ENCODE measurements at regions of chr12 and their contacts with region 1.

Region 1: DNA sequence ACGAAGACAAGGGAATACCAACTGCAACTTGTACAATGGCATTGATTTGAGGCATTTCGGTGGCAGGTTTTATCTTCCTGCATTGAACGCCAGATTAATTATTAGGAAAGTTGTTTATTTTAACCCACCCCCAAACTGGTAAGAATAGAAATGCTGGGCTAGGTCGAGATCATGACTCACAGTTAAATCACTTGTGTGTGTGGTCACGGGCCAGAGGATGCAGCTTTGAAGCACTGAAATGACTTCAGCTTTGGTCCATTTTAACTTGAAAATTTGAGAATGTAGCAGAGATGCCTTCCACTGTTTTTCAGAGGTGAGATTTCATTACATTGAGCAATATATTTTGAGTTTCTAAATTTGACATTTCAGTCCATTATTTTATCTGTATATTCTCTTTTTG is 23.6 kb upstream of the KCNH3 start:
- DNase-seq: no peak
- H3K4me3 ChIP-seq: no peak overlapping the region
- H3K27ac ChIP-seq: no peak overlapping the region
- H3K4me1 ChIP-seq: peaks cover 13% of the 10 kb centered on the region
- H3K27me3 ChIP-seq: no peaks in the 10 kb centered on the region
- CTCF ChIP-seq: no peak

Region 2: DNA sequence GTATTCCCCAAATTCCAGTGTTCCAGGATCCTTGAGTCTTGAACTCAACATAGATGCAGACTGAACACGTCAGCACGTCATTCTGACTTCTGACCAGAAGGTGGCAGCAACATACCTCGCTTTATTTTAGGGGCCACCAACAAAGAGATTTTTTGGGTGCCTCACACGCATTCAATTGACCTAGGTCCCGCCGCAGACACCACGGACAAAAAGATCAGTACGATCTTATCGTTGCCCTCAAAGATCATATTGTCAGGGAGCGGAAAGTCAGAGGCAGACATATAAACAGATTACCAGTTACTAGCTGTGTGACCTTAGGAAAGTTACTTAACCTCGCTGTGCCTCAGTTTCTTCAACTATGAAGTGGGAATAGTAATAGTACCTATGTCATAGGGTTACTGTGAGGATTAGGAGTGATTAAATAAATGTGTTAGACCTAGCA is 226.8 kb before region 1 on chr12:
- CTCF ChIA-PET with region 1: interaction called, 5 read pairs
- POLR2A ChIA-PET with region 1: no interaction called
- intact Hi-C with region 1: loop called (anchors 1 kb)
- DNase-seq: peak; percentile 68
- H3K4me3 ChIP-seq: no peak overlapping the region
- H3K27ac ChIP-seq: no peak overlapping the region
- H3K4me1 ChIP-seq: peaks cover 7% of the 10 kb centered on the region
- H3K27me3 ChIP-seq: no peaks in the 10 kb centered on the region
- CTCF ChIP-seq: peak; percentile 93

Region 3: DNA sequence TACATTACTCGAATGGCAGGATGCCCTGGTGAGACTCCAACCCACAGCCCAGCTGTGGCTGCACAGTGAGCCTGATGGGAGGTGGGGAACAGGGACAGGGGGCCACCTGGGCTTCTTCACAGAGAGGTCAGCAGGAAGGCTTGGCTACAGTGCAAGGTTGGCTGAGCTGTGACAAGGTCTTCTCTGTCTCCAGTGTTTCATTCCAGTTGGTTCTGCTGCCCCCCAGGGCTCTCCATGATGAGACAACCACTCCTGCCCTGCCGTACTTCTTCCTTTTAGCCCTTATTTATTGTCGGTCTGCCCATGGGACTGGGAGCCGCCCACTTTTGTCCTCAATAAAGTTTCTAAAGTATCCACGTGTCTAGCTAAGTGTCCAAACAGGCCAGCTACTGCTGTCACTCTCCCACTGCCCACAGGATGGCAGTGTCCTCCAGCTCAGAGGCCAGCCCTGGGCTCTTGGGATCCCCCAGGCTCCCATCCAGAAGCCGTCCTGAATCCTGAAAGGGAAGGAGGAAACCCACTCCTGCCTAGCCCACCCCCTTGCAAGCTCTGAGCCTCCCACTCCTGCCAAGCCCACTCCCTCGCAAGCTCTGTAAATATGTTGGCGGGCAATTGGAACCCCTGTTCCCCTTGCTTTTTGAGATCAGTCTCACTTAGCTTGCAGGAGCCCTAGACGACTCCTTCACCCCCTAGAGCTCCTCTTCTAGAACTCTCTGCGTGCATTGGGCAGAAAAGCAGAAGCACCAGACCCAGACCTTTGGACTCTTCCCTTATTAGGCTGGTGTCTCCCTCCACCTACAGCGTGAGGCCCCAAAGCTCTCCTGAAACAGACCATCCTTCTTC is 183.7 kb before region 1 on chr12:
- CTCF ChIA-PET with region 1: interaction called, 11 read pairs
- POLR2A ChIA-PET with region 1: no interaction called
- intact Hi-C with region 1: no loop called
- DNase-seq: peak; percentile 78
- H3K4me3 ChIP-seq: no peak overlapping the region
- H3K27ac ChIP-seq: no peak overlapping the region
- H3K4me1 ChIP-seq: no peaks in the 10 kb centered on the region
- H3K27me3 ChIP-seq: no peaks in the 10 kb centered on the region
- CTCF ChIP-seq: peak; percentile 74

Region 4: DNA sequence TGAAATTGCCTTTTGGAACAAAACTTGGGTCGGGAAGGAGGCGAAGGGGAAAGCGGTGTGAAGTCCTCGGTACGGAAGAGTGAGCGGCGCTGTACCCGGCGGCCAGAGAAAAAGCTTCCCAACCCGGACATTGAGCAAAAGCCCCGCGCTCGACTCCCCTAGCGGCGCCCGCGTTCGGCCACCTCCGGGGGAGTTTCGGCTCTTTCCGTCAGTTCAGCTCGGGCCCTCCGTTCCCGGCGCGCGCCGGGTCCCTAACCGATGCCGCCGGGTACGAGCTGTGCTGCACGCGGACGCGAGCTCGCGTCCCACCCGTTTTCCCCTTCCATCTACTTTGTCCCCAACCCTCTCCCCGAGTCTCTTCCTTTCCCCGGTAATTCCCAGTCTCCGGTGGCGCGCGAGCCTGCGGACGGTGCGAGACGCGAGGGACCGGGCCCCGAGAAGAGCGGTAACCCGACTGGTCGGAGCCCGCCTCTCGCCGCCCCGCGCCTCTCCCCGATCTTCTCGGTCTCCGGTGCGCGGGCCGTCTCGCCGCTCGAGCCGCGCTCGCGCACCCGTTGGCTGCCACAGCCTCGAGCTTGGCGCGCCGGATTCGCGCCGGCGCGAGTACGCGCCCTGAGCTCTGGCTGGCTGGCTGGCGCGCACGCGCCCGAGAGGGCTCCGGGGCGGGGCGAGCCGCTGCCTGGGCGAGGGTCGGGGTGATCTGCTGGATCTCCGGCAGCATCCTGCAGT is 148.4 kb before region 1 on chr12:
- CTCF ChIA-PET with region 1: interaction called, 13 read pairs
- POLR2A ChIA-PET with region 1: interaction called, 10 read pairs
- intact Hi-C with region 1: no loop called
- DNase-seq: peak; percentile 97
- H3K4me3 ChIP-seq: peak overlapping the region; percentile 75
- H3K27ac ChIP-seq: peak overlapping the region; percentile 97
- H3K4me1 ChIP-seq: peaks cover 20% of the 10 kb centered on the region
- H3K27me3 ChIP-seq: no peaks in the 10 kb centered on the region
- CTCF ChIP-seq: peak; percentile 36; the same call in 1 of the 2 replicates

Region 5: GRCh38 chr12:50110762-50111351 is 595.6 kb after region 1 on chr12:
- CTCF ChIA-PET with region 1: no interaction called
- POLR2A ChIA-PET with region 1: no interaction called
- intact Hi-C with region 1: no loop called
- DNase-seq: peak; percentile 33
- H3K4me3 ChIP-seq: no peak overlapping the region
- H3K27ac ChIP-seq: peak overlapping the region; percentile 49
- H3K4me1 ChIP-seq: peaks cover 26% of the 10 kb centered on the region
- H3K27me3 ChIP-seq: no peaks in the 10 kb centered on the region
- CTCF ChIP-seq: no peak